Gastrocnemius medialis (tissue), 4 donors: ENCODE measurements at regions of chr1 and their contacts with region 1.

Region 1: DNA sequence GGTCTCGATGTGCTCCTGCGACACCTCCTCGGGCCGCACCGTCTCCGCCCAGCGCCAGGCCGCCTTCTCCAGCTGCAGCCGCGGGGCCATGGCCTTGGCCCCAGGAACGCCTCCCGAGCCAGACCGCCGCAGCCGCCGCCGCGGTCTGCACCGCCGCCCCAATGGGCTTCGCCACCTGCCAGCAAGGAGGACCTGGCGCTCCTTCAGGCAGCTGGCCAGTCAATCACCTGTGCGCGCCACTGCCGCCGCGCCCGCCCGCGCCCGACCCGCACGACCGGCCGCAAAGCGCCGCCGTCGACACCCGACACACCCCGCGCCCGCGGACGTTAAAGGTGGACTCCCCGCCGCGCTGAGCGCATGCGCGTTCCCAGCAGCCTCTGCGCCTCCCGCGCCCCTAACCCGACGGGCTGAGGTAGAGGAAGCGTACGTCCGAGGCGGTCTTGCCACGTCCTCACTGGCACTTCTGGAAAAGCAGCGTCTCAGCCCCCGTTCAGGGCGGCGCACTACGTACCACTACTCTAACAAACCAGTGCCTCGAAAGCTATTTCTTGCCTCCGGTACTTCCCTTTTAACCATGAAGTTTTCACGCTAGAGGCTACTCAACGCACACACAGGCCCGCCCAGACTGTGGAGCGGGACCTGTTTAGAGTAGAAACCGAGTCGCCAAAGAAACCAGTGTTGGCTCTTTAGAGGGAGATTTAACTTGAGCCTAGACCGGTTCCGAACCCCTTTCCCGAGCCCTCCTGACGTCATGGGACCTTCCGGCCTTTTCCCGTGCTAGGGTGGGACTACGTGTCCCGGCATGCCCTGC is at the start of gene USP48:
- DNase-seq: peak; percentile 95 to 96
- ATAC-seq: peak; percentile 94 to 96
- H3K4me3 ChIP-seq: peak within 1 kb of the TSS; percentile 89 to 95 (median 92)
- H3K27ac ChIP-seq: peak within 1 kb of the TSS; percentile 97 to 100 (median 98)
- H3K4me1 ChIP-seq: peaks cover 9 to 19% of the 10 kb centered on the region in 2 donors
- H3K27me3 ChIP-seq: no peaks in the 10 kb centered on the region
- CTCF ChIP-seq: peak in 2 of 5 experiments; percentile 3 to 27
- POLR2A ChIP-seq: peak; percentile 87 to 93
- total RNA-seq, gene USP48: 11.5 to 24.4 (median 14.5) TPM

Region 2: GRCh38 chr1:20271498-20272400 is 1511.3 kb before region 1 on chr1:
- in situ Hi-C with region 1: no loop called
- intact Hi-C with region 1: loop called (anchors 5 kb)
- DNase-seq: no peak
- ATAC-seq: no peak
- H3K4me3 ChIP-seq: no peak overlapping the region
- H3K27ac ChIP-seq: no peak overlapping the region
- H3K4me1 ChIP-seq: no peaks in the 10 kb centered on the region
- H3K27me3 ChIP-seq: no peaks in the 10 kb centered on the region
- CTCF ChIP-seq: no peak
- POLR2A ChIP-seq: no peak

Region 3: DNA sequence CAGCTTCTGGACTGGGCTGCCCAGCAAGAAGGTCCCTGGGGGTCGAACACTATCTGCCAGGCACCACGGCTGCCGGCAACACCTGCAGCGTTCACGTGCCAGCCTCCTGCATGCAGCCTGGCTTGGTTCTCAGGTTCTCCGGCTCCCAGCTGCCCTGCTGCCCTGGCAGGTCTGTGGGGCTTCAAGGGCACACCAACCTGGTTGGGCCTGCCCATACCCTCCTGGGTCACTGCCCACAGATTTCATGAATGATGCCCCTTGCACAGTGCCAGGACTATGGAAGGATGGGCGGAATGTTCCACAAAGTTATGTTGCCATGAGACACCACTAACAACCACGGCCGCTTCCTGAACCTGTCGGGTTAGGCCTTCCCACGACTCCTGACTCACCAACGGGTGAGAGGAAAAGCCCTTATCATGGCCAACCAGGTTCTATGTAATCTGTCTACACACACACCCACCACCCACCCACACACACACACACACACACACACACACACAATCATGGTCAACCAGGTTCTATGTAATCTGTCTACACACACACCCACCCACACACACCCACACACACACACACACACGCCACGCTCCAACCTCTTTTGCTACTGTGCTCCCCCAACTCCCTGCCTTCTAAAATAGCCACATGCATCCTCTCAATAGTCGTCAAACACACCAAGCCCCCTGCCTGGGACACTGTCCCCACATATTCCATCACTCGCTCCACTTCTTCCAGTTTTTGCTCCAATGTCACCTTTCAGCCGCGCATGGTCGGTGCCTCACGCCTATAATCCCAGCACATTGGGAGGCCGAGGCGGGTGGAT is 121.8 kb after region 1 on chr1:
- in situ Hi-C with region 1: no loop called
- intact Hi-C with region 1: no loop called
- DNase-seq: peak; percentile 43 to 78
- ATAC-seq: peak; percentile 43 to 64
- H3K4me3 ChIP-seq: no peak overlapping the region
- H3K27ac ChIP-seq: peak overlapping the region; percentile 87 to 94 (median 90)
- H3K4me1 ChIP-seq: peaks cover 88 to 96% of the 10 kb centered on the region in 2 donors
- H3K27me3 ChIP-seq: no peaks in the 10 kb centered on the region
- CTCF ChIP-seq: no peak
- POLR2A ChIP-seq: no peak

Region 4: DNA sequence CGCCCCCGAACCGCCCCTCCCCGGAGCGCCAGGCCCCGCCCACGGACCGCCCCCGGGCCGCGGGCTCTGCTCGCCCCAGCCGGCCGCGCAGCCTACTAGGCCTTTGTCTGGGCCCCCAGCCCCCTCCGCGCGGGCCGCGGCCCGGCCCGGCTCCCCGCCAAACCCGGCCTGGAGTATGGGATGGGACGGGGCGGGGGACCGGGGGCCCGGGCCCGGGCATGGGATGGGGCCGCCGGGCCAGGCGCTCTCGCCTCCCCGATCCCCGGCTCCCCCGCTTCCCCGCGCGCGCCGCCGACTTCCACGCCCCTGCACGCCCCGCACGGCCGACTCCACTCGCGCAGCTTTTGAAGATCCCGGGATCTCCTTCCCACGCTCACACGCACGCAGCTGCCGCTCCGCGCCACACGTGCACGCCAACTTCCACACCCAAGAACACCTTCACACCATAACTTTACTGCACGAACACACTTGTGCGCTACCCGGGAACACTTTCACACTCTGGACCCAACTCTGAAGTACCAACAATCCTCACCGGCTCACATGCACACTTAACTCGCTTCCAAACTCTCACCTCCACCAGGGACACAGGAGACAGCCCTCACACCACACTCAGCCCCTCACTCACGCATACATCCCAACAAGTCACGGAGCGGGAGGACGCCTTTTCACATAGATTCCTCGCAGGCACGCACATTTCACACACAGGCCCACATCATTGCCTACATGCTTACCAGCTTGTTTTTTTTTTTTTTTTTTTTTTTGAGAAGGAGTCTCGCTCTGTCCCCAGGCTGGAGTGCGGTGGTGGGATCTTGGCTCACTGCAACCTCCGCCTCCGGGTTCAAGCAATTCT is 154.5 kb after region 1 on chr1:
- in situ Hi-C with region 1: no loop called
- intact Hi-C with region 1: loop called (anchors 1 kb)
- DNase-seq: peak; percentile 59 to 76
- ATAC-seq: peak; percentile 45 to 61
- H3K4me3 ChIP-seq: peak overlapping the region; percentile 55 to 70 (median 60)
- H3K27ac ChIP-seq: peak overlapping the region; percentile 72 to 83 (median 80)
- H3K4me1 ChIP-seq: peaks cover 48 to 75% of the 10 kb centered on the region in 2 donors
- H3K27me3 ChIP-seq: no peaks in the 10 kb centered on the region
- CTCF ChIP-seq: no peak
- POLR2A ChIP-seq: peak in 1 of 2 donors; percentile 37

Region 5: GRCh38 chr1:21963477-21964217 is 180.6 kb after region 1 on chr1:
- in situ Hi-C with region 1: no loop called
- intact Hi-C with region 1: loop called (anchors 2 kb)
- DNase-seq: peak; percentile 41 to 61
- ATAC-seq: peak; percentile 88 to 96
- H3K4me3 ChIP-seq: no peak overlapping the region
- H3K27ac ChIP-seq: no peak overlapping the region
- H3K4me1 ChIP-seq: no peaks in the 10 kb centered on the region
- H3K27me3 ChIP-seq: no peaks in the 10 kb centered on the region
- CTCF ChIP-seq: peak; percentile 86 to 93 (median 88)
- POLR2A ChIP-seq: no peak

Region 6: DNA sequence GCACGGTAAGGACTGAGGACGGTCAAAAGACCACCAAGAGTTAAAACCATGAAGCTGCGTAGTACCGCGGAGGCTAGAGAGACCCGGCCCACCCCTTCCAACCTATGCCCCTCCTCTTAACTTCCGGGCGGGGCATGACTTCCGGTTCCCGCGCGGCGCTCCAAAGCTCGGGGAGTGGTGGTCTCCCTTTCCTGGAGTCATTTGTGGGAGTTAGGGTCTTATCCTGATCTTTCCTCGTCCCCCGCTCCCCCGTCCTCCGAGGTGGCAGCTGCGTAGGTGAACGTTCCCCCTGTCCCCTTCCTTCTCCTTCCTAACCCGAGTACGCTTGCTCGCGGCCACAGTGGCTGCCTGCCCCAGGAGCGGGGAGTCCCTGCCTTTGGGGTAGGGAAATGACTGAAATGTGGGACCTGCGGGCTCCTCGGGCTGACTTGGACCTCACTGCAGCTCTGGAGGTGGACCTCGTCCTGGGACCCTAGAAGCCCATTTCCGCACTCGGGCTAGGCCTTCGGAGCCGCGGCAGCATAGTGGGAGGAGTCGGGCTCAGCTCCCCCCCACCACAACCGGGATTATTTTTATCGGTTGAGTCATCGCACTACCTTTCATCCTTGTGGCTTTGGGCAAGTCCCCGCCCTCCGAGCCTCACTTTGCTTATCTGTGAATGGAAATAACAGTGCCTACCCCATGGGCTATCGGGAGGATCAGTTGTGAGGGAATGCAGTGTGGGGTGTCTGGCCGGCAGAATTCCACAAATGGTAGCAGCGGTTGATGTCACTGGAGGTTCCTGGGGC is 242.5 kb after region 1 on chr1:
- in situ Hi-C with region 1: no loop called
- intact Hi-C with region 1: loop called (anchors 1 kb)
- DNase-seq: peak; percentile 78 to 88
- ATAC-seq: peak; percentile 95 to 96
- H3K4me3 ChIP-seq: peak overlapping the region; percentile 90 to 99 (median 96)
- H3K27ac ChIP-seq: peak overlapping the region; percentile 99 to 100 (median 100)
- H3K4me1 ChIP-seq: peaks cover 11 to 16% of the 10 kb centered on the region in 2 donors
- H3K27me3 ChIP-seq: no peaks in the 10 kb centered on the region
- CTCF ChIP-seq: no peak
- POLR2A ChIP-seq: peak; percentile 83 to 94

Region 7: GRCh38 chr1:22052115-22053016 is 269.3 kb after region 1 on chr1 and contains the start of gene CDC42:
- in situ Hi-C with region 1: no loop called
- intact Hi-C with region 1: loop called (anchors 2 kb)
- DNase-seq: peak; percentile 96 to 98
- ATAC-seq: peak; percentile 93 to 94
- H3K4me3 ChIP-seq: peak within 1 kb of the TSS; percentile 63 to 81 (median 72)
- H3K27ac ChIP-seq: peak within 1 kb of the TSS; percentile 94 to 99 (median 96)
- H3K4me1 ChIP-seq: peaks cover 36 to 38% of the 10 kb centered on the region in 2 donors
- H3K27me3 ChIP-seq: no peaks in the 10 kb centered on the region
- CTCF ChIP-seq: no peak
- POLR2A ChIP-seq: peak; percentile 96 to 99
- total RNA-seq, gene CDC42: 77.0 to 111 (median 108) TPM

Region 8: DNA sequence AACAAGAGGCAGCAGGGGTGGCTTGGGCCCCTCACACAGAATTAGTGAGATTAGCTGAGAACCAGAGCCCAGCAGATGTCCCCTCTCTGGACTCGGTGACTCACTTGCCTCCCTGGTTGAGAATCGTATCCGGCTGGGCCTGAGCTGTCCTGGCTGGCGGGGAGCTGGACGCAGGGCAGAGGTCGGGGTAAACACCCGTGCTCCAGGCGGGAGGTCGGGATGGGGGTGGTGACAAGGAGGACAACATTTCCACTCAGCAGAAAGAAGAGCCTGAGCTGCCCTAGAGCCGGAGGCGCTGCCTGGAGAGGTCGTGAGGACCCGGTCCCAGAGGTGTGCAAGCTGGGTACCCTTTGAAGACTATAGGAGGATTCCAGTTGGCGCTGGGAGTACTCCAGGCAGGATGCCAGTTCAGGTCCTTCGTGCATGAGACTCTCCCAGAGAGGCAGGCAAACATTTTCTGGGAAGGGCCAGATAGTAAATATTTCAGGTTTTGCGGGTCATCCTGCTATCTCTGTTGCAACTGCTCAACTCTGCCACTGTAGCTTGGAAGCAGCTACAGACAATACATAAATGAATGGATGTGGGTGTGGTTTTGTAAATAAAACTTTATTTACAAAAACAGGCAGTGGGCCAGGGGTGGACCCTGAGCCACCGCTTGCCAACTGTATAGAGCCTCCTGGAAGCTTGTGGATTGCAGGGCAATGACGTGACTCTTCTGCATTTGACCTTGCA is 476.6 kb after region 1 on chr1:
- in situ Hi-C with region 1: no loop called
- intact Hi-C with region 1: no loop called
- DNase-seq: no peak
- ATAC-seq: no peak
- H3K4me3 ChIP-seq: no peak overlapping the region
- H3K27ac ChIP-seq: no peak overlapping the region
- H3K4me1 ChIP-seq: no peaks in the 10 kb centered on the region
- H3K27me3 ChIP-seq: peaks cover 0 to 4% (median 0%) of the 10 kb centered on the region in 3 donors
- CTCF ChIP-seq: no peak
- POLR2A ChIP-seq: no peak

Region 9: GRCh38 chr1:23019094-23019862 is 1236.2 kb after region 1 on chr1 and contains the start of gene KDM1A:
- in situ Hi-C with region 1: no loop called
- intact Hi-C with region 1: loop called (anchors 10 kb)
- DNase-seq: peak; percentile 94 to 97
- ATAC-seq: peak; percentile 99 to 100
- H3K4me3 ChIP-seq: peak within 1 kb of the TSS; percentile 84 to 92 (median 88)
- H3K27ac ChIP-seq: peak within 1 kb of the TSS; percentile 84 to 95 (median 92)
- H3K4me1 ChIP-seq: peaks cover 8 to 11% of the 10 kb centered on the region in 2 donors
- H3K27me3 ChIP-seq: no peaks in the 10 kb centered on the region
- CTCF ChIP-seq: no peak
- POLR2A ChIP-seq: peak; percentile 83 to 86
- total RNA-seq, gene KDM1A: 46.0 to 76.2 (median 58.7) TPM